ENCODE measurements at regions of chr13 and their contacts with region 1.

Region 1: GRCh38 chr13:79311386-79311785 is 94.7 kb downstream of the RBM26 start:
- DNase-seq: no peak
- ATAC-seq: no peak
- H3K4me3 ChIP-seq: no peak overlapping the region
- H3K27ac ChIP-seq: no peak overlapping the region
- H3K4me1 ChIP-seq: no peaks in the 10 kb centered on the region
- H3K27me3 ChIP-seq: no peaks in the 10 kb centered on the region

Region 2: GRCh38 chr13:78787190-78787589 is 524.2 kb before region 1 on chr13:
- intact Hi-C with region 1: no loop called
- DNase-seq: no peak
- ATAC-seq: no peak
- H3K4me3 ChIP-seq: no peak overlapping the region
- H3K27ac ChIP-seq: no peak overlapping the region
- H3K4me1 ChIP-seq: no peaks in the 10 kb centered on the region
- H3K27me3 ChIP-seq: no peaks in the 10 kb centered on the region

Region 3: DNA sequence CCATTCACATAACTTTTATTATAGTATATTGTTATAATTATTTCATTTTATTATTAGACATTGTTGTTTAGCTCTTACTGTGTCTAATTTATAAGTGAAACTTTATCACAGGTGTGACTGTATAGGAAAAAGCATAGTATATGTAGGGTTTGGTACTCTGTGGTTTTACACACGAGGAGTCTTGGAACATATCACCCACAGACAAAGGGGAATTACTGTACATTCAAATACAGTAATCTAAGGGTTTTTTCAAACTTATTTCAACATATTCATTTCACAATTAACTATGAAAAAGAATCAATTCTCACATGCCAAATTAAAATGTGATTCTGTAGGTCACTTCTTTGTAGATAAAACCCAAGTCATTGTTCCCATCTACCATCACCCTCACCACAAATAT is 48.7 kb after region 1 on chr13:
- intact Hi-C with region 1: loop called in 1 of 2 experiments (anchors 10 kb)
- DNase-seq: no peak
- ATAC-seq: no peak
- H3K4me3 ChIP-seq: no peak overlapping the region
- H3K27ac ChIP-seq: no peak overlapping the region
- H3K4me1 ChIP-seq: no peaks in the 10 kb centered on the region
- H3K27me3 ChIP-seq: no peaks in the 10 kb centered on the region

Measured in aorta (tissue), 5 donors.